Activated B cell treated with CpG ODN at 0.5 μM for 24 hours (primary cell): ENCODE measurements at regions of chr6 and their contacts with region 1.

Region 1: GRCh38 chr6:15287670-15288375 is 42.0 kb downstream of the JARID2 start:
- DNase-seq: peak; percentile 19
- ATAC-seq: peak; percentile 99
- H3K4me3 Mint-ChIP-seq: peak overlapping the region; percentile 72
- H3K27ac Mint-ChIP-seq: peak overlapping the region; percentile 91
- H3K4me1 Mint-ChIP-seq: peaks cover 61% of the 10 kb centered on the region
- H3K27me3 Mint-ChIP-seq: no peaks in the 10 kb centered on the region
- CTCF ChIP-seq: no peak

Region 2: DNA sequence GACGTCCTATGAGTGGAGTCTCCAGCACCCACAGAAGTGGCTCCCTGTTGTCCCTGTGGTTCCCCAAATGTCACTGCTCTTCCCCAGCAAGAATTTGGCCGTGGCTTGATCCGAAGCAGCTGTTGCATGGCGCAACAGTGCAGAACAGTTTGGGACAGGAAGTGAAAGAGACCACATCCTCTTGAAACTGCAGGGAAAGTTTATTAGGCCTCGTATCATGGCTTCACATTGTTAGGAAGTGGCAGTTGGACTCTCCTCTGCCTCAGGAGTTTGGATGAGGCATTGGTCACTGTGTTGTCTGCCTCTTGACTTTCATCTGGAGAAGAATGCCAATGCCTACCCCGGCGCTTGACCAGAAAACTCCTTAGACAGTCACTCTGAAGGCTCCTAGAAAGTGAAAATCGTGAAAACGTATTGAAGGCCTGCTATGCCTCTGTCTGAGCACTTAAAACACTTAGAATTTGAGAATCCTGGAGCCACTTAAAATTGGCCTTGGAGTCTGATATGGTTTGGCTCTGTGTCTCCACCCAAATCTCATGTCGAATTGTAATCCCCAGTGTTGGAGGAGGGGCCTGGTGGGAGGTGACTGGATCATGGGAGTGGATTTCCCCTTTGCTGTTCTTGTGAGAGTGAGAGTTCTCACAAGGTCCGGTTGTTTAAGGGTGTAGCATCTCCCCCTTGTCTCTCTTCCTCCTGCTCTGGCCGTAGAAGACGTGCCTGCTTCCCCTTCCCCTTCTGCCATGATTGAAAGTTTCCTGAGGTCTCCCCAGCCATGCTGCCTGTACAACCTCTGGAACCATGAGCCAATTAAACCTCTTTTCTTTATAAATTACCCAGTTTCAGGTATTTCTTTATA is 376.9 kb before region 1 on chr6:
- CTCF ChIA-PET with region 1: no interaction called
- POLR2A ChIA-PET with region 1: no interaction called
- intact Hi-C with region 1: no loop called
- DNase-seq: peak; percentile 34
- ATAC-seq: peak; percentile 92
- H3K4me3 Mint-ChIP-seq: peak overlapping the region; percentile 70
- H3K27ac Mint-ChIP-seq: peak overlapping the region; percentile 88
- H3K4me1 Mint-ChIP-seq: peaks cover 41% of the 10 kb centered on the region
- H3K27me3 Mint-ChIP-seq: no peaks in the 10 kb centered on the region
- CTCF ChIP-seq: no peak

Region 3: GRCh38 chr6:15001326-15001910 is 286.4 kb before region 1 on chr6:
- CTCF ChIA-PET with region 1: no interaction called
- POLR2A ChIA-PET with region 1: no interaction called
- intact Hi-C with region 1: no loop called
- DNase-seq: no peak
- ATAC-seq: no peak
- H3K4me3 Mint-ChIP-seq: no peak overlapping the region
- H3K27ac Mint-ChIP-seq: no peak overlapping the region
- H3K4me1 Mint-ChIP-seq: no peaks in the 10 kb centered on the region
- H3K27me3 Mint-ChIP-seq: no peaks in the 10 kb centered on the region
- CTCF ChIP-seq: no peak

Region 4: GRCh38 chr6:15264902-15265761 is 22.7 kb before region 1 on chr6:
- CTCF ChIA-PET with region 1: no interaction called
- POLR2A ChIA-PET with region 1: interaction called, 12 read pairs
- intact Hi-C with region 1: loop called (anchors 2 kb)
- DNase-seq: no peak
- ATAC-seq: no peak
- H3K4me3 Mint-ChIP-seq: peak overlapping the region; percentile 59
- H3K27ac Mint-ChIP-seq: peak overlapping the region; percentile 42
- H3K4me1 Mint-ChIP-seq: peaks cover 93% of the 10 kb centered on the region
- H3K27me3 Mint-ChIP-seq: no peaks in the 10 kb centered on the region
- CTCF ChIP-seq: no peak

Region 5: DNA sequence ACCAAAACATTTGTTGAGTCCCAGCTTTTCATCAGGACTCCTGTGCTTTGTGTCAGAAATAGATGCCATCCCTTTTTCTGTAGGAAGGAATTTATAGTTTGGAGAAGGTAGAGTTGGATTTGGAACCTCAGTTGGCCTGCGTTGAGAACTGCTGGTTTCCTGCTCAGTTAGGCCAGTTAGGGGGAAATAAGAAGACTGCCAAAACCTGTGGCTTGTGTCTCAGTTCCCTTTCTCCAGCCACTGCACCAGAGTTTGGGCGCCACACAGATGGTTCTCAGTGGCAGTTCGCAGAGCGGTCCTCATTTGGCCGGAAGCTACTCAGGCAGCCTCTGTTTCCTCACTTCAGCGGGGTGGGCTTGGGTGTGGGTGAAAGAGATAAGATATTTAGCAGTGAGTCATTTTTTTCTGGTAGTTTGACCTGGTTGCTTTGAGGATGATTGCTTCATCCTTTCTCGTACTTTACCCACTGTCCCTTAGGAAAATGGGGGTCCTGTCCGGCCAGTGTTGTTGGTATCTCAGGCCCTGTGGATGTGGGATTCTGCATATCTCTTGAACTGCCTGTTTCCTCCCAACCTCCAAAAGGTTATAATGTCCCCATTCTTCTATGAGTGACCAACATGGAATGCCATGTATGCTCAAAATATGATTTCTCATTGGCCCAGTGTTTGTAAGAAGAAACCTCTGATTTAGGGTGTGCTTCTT is 11.8 kb after region 1 on chr6:
- CTCF ChIA-PET with region 1: interaction called, 4 read pairs
- POLR2A ChIA-PET with region 1: interaction called, 12 read pairs
- intact Hi-C with region 1: loop called (anchors 1 kb)
- DNase-seq: peak; percentile 59
- ATAC-seq: peak; percentile 97
- H3K4me3 Mint-ChIP-seq: peak overlapping the region; percentile 67
- H3K27ac Mint-ChIP-seq: peak overlapping the region; percentile 89
- H3K4me1 Mint-ChIP-seq: peaks cover 81% of the 10 kb centered on the region
- H3K27me3 Mint-ChIP-seq: no peaks in the 10 kb centered on the region
- CTCF ChIP-seq: no peak

Region 6: DNA sequence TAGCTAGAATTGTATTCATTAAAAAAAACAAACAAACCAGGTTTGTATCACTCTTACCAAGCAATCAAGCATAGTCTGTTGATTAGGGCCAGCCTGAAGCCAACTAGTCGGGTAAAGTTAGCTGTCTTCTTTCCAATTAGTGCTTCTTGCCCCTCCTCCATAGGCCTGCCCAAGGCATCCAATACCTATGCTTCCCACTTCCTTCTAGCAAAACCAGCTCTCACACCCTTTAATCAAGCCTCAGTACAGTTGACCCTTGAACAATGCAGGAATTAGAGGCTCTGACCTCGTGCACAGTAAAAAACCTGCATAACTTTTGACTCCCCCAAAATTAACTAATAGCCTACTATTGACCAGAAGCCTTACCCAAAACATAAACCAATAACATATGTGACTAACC is 494.1 kb after region 1 on chr6:
- CTCF ChIA-PET with region 1: no interaction called
- POLR2A ChIA-PET with region 1: no interaction called
- intact Hi-C with region 1: no loop called
- DNase-seq: no peak
- ATAC-seq: no peak
- H3K4me3 Mint-ChIP-seq: no peak overlapping the region
- H3K27ac Mint-ChIP-seq: no peak overlapping the region
- H3K4me1 Mint-ChIP-seq: no peaks in the 10 kb centered on the region
- H3K27me3 Mint-ChIP-seq: no peaks in the 10 kb centered on the region
- CTCF ChIP-seq: no peak